ENCODE measurements at regions of chr4 and their contacts with region 1.

Region 1: GRCh38 chr4:145234091-145234706 is 53.8 kb upstream of the OTUD4 start:
- DNase-seq: peak in 3 of 6 donors; percentile 37 to 59 (median 58)
- ATAC-seq: peak; percentile 82 to 95 (median 92)
- H3K4me3 ChIP-seq: no peak overlapping the region
- H3K27ac ChIP-seq: no peak overlapping the region
- H3K4me1 ChIP-seq: peaks cover 0 to 4% (median 0%) of the 10 kb centered on the region in 3 donors
- H3K27me3 ChIP-seq: no peaks in the 10 kb centered on the region
- CTCF ChIP-seq: peak; percentile 24 to 63 (median 40)

Region 2: DNA sequence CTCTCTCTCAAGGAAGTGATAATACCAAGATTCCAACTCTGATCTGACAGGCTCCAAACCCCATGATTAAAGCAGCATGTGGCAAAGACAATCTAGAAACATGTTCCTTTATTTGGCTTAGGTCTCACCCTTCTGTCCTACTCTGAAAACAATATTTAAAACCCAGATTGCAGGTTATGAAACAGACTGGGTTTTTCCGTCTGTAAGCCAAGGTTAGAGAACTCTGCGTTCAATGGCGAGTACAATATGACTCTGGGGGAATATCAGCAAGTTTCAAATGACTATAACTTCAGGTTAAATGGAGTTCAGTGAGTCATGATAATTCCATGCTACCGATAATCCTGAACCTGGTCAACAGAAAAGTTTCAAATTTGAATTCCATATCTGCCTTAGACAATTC is 187.0 kb before region 1 on chr4:
- intact Hi-C with region 1: no loop called
- DNase-seq: no peak
- ATAC-seq: no peak
- H3K4me3 ChIP-seq: no peak overlapping the region
- H3K27ac ChIP-seq: no peak overlapping the region
- H3K4me1 ChIP-seq: no peaks in the 10 kb centered on the region
- H3K27me3 ChIP-seq: no peaks in the 10 kb centered on the region
- CTCF ChIP-seq: no peak

Region 3: GRCh38 chr4:145299380-145300076 is 65.3 kb after region 1 on chr4:
- intact Hi-C with region 1: no loop called
- DNase-seq: no peak
- ATAC-seq: peak in 1 of 4 donors; percentile 25
- H3K4me3 ChIP-seq: no peak overlapping the region
- H3K27ac ChIP-seq: no peak overlapping the region
- H3K4me1 ChIP-seq: no peaks in the 10 kb centered on the region
- H3K27me3 ChIP-seq: no peaks in the 10 kb centered on the region
- CTCF ChIP-seq: no peak

Region 4: GRCh38 chr4:145390571-145390970 is 156.4 kb after region 1 on chr4:
- intact Hi-C with region 1: no loop called
- DNase-seq: no peak
- ATAC-seq: no peak
- H3K4me3 ChIP-seq: no peak overlapping the region
- H3K27ac ChIP-seq: no peak overlapping the region
- H3K4me1 ChIP-seq: no peaks in the 10 kb centered on the region
- H3K27me3 ChIP-seq: no peaks in the 10 kb centered on the region
- CTCF ChIP-seq: no peak

Region 5: DNA sequence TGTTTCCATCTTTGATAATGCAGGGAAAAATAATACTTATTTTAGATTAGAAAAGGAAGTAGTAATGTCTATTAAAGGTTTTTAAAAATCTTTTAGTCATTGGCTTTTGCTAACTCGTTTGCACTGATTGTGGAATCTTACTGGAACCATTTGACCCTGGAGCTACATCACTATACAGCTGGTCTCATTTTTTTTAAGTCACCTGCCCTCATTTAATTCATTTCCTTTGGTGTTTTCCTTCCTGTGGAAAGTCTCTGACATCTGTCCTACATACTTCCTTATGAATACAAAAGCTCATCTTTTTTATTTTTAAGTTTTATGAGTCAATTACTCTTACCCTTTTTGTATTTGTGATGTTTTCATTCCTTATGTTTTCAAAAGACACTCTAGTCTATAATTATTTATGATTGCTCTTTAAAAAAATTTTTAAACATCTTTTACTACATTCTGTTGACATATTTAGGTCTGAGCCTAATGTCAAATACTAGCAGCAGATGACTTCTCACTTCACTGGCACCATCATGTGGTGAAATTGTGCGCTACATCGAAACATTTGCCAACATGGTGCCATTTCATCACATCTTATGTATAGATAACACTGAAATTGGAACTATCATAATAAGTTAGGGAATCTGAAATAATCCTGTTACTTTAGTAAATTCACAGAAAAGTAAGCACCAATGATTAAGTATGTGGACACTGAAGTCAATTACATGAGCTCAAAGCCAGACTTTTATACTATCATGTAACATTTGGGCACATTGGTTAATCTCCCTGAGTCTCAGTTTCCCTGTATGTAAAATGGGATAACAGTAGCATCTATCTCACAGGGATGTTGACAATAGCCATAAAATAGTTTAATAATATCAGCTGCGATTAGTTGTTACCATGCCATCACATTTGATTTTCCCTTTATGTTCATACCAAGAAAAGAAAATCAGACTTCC is 375.6 kb after region 1 on chr4:
- intact Hi-C with region 1: loop called (anchors 5 to 10 kb)
- DNase-seq: peak in 5 of 6 donors; percentile 18 to 78 (median 37)
- ATAC-seq: peak; percentile 75 to 91 (median 90)
- H3K4me3 ChIP-seq: no peak overlapping the region
- H3K27ac ChIP-seq: no peak overlapping the region
- H3K4me1 ChIP-seq: no peaks in the 10 kb centered on the region
- H3K27me3 ChIP-seq: no peaks in the 10 kb centered on the region
- CTCF ChIP-seq: peak in 3 of 4 donors; percentile 25 to 63 (median 49)

Region 6: DNA sequence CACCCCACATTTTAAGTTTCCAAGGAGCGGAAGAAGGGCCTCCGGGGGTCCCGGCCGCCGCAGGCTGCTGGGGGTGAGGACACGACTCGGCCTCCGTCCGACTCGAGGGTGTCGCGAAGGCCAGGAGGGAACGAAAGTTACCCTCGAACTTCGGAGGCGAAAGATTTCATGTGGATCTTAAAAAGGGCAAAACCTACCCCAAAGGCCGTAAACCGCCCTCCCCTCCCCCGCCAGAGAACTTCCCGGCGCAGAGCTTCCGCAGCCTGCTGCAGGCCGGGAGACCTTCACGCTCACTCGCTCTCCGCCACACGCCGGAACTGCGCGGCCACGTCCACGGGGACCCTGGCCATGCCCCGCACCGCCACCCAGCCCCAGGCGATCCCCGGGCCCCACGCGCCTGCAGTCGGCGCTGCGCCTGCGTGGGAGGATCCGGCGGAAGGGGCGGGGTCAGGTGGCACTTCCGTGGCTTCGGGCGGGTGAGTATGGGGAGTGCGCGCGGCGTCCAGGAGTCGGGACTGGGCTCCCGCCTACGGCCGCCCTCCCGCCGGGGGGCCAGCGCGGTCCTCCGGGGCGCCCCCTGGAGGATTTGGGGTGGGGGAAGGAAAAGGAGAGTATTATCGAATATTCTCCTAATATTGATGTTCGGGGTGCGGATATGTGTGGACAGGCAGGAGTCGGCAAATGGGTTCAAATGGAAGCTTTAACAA is 384.9 kb after region 1 on chr4 and contains the start of gene MMAA:
- intact Hi-C with region 1: loop called in 2 of 3 experiments (anchors 5 to 10 kb)
- DNase-seq: peak; percentile 93 to 97 (median 95)
- ATAC-seq: peak; percentile 95 to 98 (median 97)
- H3K4me3 ChIP-seq: peak within 1 kb of the TSS; percentile 35 to 82 (median 72)
- H3K27ac ChIP-seq: peak within 1 kb of the TSS; percentile 92 to 98 (median 96)
- H3K4me1 ChIP-seq: peaks cover 3 to 23% (median 23%) of the 10 kb centered on the region in 3 donors
- H3K27me3 ChIP-seq: no peaks in the 10 kb centered on the region
- CTCF ChIP-seq: peak in 2 of 4 donors; percentile 35 to 40
- total RNA-seq, gene MMAA: 3.0 to 9.5 (median 5.5) TPM

Measured in pancreas (tissue), 10 donors.